ENCODE measurements at regions of chr3 and their contacts with region 1.

Region 1: GRCh38 chr3:137105277-137105977 is 147.6 kb downstream of the IL20RB start:
- DNase-seq: peak; percentile 30
- ATAC-seq: peak; percentile 51
- H3K4me3 Mint-ChIP-seq: no peak overlapping the region
- H3K27ac Mint-ChIP-seq: no peak overlapping the region
- H3K4me1 Mint-ChIP-seq: no peaks in the 10 kb centered on the region
- H3K27me3 Mint-ChIP-seq: peaks cover 7% of the 10 kb centered on the region

Region 2: GRCh38 chr3:137032465-137033120 is 72.8 kb before region 1 on chr3:
- CTCF ChIA-PET with region 1: interaction called, 14 read pairs
- POLR2A ChIA-PET with region 1: no interaction called
- DNase-seq: peak; percentile 86
- ATAC-seq: peak; percentile 85
- H3K4me3 Mint-ChIP-seq: peak overlapping the region; percentile 60
- H3K27ac Mint-ChIP-seq: no peak overlapping the region
- H3K4me1 Mint-ChIP-seq: peaks cover 10% of the 10 kb centered on the region
- H3K27me3 Mint-ChIP-seq: peaks cover 28% of the 10 kb centered on the region

Region 3: DNA sequence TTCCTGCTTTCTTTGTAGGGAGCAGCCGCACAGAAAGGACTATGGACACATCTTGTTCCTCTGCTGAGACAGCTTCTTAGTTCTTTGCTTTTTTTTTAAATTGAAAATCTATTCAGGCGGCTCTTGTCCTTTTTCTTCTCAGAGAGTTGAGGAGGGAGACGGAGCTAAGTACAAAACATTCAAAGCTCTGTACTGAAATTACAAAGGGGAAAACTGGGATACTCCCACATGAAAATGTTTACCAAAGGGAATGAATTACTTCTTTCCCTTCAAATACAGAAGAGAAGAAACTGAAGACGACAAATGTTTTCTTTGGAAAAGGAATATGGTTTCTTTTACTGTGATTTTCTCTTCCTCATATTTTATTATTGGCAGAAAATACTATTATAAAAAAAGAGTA is 137.6 kb after region 1 on chr3:
- CTCF ChIA-PET with region 1: no interaction called
- POLR2A ChIA-PET with region 1: no interaction called
- DNase-seq: no peak
- ATAC-seq: no peak
- H3K4me3 Mint-ChIP-seq: no peak overlapping the region
- H3K27ac Mint-ChIP-seq: no peak overlapping the region
- H3K4me1 Mint-ChIP-seq: no peaks in the 10 kb centered on the region
- H3K27me3 Mint-ChIP-seq: no peaks in the 10 kb centered on the region

Region 4: DNA sequence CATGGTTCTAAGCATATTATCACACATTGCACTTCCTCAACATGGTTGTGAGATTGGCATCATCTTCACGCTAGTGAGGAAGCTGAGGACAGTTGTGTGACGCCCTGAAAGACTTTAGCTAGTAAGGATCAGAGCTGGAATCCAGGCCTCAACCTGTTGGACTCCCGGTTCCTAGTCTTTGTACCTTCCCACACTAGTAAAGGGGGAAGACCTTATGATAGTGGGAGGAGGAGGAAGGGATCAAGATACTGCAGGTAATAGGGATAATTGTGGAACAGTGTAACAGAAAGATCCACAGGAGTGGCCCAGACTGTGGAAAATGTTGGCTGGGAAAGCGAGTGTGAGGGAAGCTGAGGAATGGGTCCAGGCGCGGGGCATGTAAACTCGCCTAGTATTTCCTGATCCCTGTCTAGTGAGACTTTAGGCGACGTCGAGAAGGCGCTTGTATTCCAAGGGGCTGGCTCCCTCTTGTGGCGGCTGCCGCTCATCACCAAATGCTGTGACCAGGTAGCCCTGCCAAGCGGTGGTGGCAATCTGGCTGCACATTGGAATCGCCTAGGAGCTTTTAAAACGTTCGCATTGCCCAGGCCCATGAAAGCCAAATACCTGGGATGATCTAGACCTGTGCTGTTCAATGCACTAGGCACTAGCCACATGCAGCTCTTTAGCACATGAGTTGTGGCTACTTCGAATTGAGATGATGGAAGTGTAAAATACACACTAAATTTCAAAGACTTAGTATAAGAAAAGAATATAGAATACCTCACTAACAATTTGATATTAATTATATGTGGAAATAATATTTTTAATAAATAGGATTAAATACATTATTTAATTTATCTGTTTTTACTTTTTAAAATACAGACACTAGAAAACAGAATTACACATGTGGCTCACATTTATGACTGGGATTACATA is 865.7 kb after region 1 on chr3:
- CTCF ChIA-PET with region 1: interaction called, 14 read pairs
- POLR2A ChIA-PET with region 1: no interaction called
- DNase-seq: peak; percentile 67
- ATAC-seq: peak; percentile 70
- H3K4me3 Mint-ChIP-seq: no peak overlapping the region
- H3K27ac Mint-ChIP-seq: no peak overlapping the region
- H3K4me1 Mint-ChIP-seq: no peaks in the 10 kb centered on the region
- H3K27me3 Mint-ChIP-seq: peaks cover 6% of the 10 kb centered on the region